ENCODE measurements at regions of chr22 and their contacts with region 1.

Region 1: GRCh38 chr22:41697126-41697775 is 2.1 kb upstream of the MEI1 start:
- DNase-seq: peak; percentile 95
- H3K4me3 ChIP-seq: peak overlapping the region in 1 of 4 donors; percentile 42
- H3K27ac ChIP-seq: peak overlapping the region; percentile 30 to 67 (median 40)
- H3K4me1 ChIP-seq: peaks cover 4 to 18% (median 14%) of the 10 kb centered on the region in 4 donors
- H3K27me3 ChIP-seq: no peaks in the 10 kb centered on the region
- CTCF ChIP-seq: peak; percentile 98 to 100 (median 99)
- EP300 ChIP-seq: no peak
- POLR2A ChIP-seq: no peak

Region 2: GRCh38 chr22:41746567-41747400 is 49.5 kb after region 1 on chr22:
- in situ Hi-C with region 1: no loop called
- intact Hi-C with region 1: no loop called
- DNase-seq: peak; percentile 77
- H3K4me3 ChIP-seq: no peak overlapping the region
- H3K27ac ChIP-seq: no peak overlapping the region
- H3K4me1 ChIP-seq: no peaks in the 10 kb centered on the region
- H3K27me3 ChIP-seq: no peaks in the 10 kb centered on the region
- CTCF ChIP-seq: peak; percentile 62 to 77 (median 71)
- EP300 ChIP-seq: no peak
- POLR2A ChIP-seq: no peak

Region 3: DNA sequence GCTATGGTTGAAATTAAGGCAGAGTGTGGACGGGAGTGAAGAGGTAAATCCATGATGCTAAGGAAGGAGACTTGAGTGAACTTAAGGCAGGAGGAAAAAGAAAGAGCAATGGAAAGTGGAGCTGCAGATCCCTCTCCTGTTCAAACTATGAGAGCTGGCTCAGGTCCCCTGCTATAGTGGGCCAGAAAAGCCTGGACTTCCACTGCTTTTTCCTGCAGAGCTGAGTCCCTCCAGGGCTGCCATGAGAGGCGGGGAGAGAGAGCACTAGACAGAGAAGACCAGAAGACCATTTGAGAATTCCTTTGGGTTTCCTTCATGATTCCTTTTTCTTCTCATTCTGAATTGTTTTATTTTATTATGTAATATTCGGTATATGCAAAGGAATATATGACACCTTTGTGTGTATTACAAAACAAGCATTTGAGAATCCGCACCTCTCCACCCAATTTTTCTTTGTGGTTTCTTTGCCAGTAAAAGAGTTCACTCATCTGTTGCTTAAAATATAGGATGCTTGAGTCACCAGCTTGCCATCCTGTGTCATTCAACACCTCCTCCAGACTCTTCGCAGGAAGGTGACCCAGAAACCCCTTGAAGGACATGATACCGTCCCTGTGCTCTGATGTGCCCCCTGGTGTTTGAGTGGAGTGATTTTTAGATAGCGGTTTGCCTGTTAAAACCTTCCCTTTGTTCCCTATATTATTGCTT is 160.1 kb after region 1 on chr22:
- in situ Hi-C with region 1: no loop called
- intact Hi-C with region 1: loop called (anchors 5 kb)
- DNase-seq: peak; percentile 61
- H3K4me3 ChIP-seq: no peak overlapping the region
- H3K27ac ChIP-seq: peak overlapping the region; percentile 65 to 82 (median 78)
- H3K4me1 ChIP-seq: peaks cover 9 to 67% (median 32%) of the 10 kb centered on the region in 4 donors
- H3K27me3 ChIP-seq: no peaks in the 10 kb centered on the region
- CTCF ChIP-seq: peak; percentile 52 to 72 (median 58)
- EP300 ChIP-seq: no peak
- POLR2A ChIP-seq: no peak